Ovary (tissue), 10 donors: ENCODE measurements at regions of chr5 and their contacts with region 1.

Region 1: GRCh38 chr5:52915176-52915875 is 73.8 kb upstream of the ITGA2 start:
- DNase-seq: peak in 3 of 5 donors; percentile 12 to 47 (median 21)
- H3K4me3 ChIP-seq: no peak overlapping the region
- H3K27ac ChIP-seq: no peak overlapping the region
- H3K4me1 ChIP-seq: no peaks in the 10 kb centered on the region
- H3K27me3 ChIP-seq: no peaks in the 10 kb centered on the region
- CTCF ChIP-seq: peak; percentile 45 to 70 (median 57)
- EP300 ChIP-seq: no peak
- POLR2A ChIP-seq: no peak

Region 2: GRCh38 chr5:52560366-52560765 is 355.0 kb before region 1 on chr5:
- intact Hi-C with region 1: no loop called
- DNase-seq: no peak
- H3K4me3 ChIP-seq: no peak overlapping the region
- H3K27ac ChIP-seq: no peak overlapping the region
- H3K4me1 ChIP-seq: no peaks in the 10 kb centered on the region
- H3K27me3 ChIP-seq: no peaks in the 10 kb centered on the region
- CTCF ChIP-seq: no peak
- EP300 ChIP-seq: no peak
- POLR2A ChIP-seq: no peak

Region 3: DNA sequence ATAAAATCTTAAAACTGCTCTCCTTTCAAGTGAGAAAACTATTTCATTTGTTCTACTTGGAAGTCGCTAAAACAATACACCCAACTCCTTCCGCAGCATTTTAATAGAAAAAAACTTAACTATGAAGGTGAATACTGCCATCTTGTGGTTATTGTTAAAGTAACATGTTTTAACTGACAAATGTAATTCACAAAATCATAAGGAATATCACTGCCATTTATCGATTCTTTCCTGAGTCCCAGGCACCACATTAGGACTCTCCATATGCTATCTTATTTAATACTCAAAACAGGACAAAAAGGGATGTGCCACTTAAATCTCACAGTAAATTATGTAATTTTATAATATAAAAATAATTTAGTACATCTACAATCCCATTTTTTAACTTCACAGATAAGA is 258.1 kb before region 1 on chr5:
- intact Hi-C with region 1: loop called in 1 of 4 experiments (anchors 5 kb)
- DNase-seq: no peak
- H3K4me3 ChIP-seq: no peak overlapping the region
- H3K27ac ChIP-seq: no peak overlapping the region
- H3K4me1 ChIP-seq: no peaks in the 10 kb centered on the region
- H3K27me3 ChIP-seq: no peaks in the 10 kb centered on the region
- CTCF ChIP-seq: peak in 2 of 3 donors; percentile 20
- EP300 ChIP-seq: no peak
- POLR2A ChIP-seq: no peak

Region 4: DNA sequence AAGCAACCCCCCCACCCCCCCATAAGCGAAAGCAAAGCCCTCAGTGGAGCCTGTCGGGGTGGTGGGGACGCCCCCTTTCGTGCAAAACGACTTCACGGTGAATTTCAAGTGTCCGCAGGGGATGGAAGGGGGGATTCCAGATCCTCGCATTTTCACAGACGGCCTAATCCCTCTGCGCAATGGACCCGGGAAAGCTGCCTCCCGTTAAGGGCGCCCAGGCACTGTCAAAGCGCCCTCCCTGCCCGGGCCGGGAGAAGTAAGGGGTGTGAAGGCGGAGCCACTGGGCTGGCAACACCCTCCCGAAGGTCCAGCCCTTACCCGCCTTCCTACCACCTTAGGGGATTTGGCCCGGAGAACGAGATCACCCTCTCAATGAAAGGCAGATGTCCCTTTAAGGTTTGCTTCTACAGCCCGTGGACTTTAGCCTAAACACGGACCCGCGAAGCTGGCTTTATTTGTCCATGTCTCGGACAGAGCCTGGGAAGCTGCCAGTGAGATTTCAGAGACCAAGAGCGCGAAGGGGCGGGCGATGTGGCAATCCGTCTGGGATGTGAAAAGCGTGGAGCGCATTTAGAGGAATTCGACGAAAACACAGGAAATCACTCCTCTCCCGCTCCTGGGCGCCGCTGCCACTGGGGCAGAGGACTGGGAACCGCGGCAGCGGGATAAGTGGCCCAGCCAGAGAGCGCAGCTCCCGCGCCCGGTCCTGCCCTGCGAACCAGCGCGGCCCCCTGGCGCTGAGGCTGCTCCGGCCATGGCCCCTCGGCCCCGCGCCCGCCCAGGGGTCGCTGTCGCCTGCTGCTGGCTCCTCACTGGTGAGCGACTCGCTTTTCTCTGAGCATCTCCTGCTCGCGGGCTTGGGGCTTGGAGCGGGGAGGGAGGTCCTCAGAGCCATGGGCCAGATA is 127.5 kb before region 1 on chr5 and contains the starts of genes ITGA1 and PELO:
- intact Hi-C with region 1: loop called in 1 of 4 experiments (anchors 2 kb)
- DNase-seq: peak; percentile 68 to 82 (median 76)
- H3K4me3 ChIP-seq: peak within 1 kb of the TSS; percentile 60
- H3K27ac ChIP-seq: peak within 1 kb of the TSS; percentile 79 to 88
- H3K4me1 ChIP-seq: no peaks in the 10 kb centered on the region
- H3K27me3 ChIP-seq: no peaks in the 10 kb centered on the region
- CTCF ChIP-seq: peak in 2 of 3 donors; percentile 34 to 43
- EP300 ChIP-seq: no peak
- POLR2A ChIP-seq: peak; percentile 30
- total RNA-seq, gene ITGA1: 10.4 to 17.1 (median 14.7) TPM
- total RNA-seq, gene PELO: 7.9 to 19.0 (median 11.8) TPM